MCF 10A (cell line): ENCODE measurements at regions of chr15 and their contacts with region 1.

Region 1: GRCh38 chr15:69394556-69395282 is 19.4 kb upstream of the KIF23 start:
- DNase-seq: peak; percentile 72
- H3K4me3 Mint-ChIP-seq: no peak overlapping the region
- H3K27ac Mint-ChIP-seq: no peak overlapping the region
- H3K4me1 Mint-ChIP-seq: peaks cover 27% of the 10 kb centered on the region
- H3K27me3 Mint-ChIP-seq: no peaks in the 10 kb centered on the region
- CTCF ChIP-seq: peak; percentile 95

Region 2: GRCh38 chr15:69058830-69059556 is 335.7 kb before region 1 on chr15:
- CTCF ChIA-PET with region 1: interaction called, 21 read pairs
- POLR2A ChIA-PET with region 1: interaction called, 3 read pairs
- intact Hi-C with region 1: loop called (anchors 1 kb)
- DNase-seq: peak; percentile 92
- H3K4me3 Mint-ChIP-seq: no peak overlapping the region
- H3K27ac Mint-ChIP-seq: no peak overlapping the region
- H3K4me1 Mint-ChIP-seq: no peaks in the 10 kb centered on the region
- H3K27me3 Mint-ChIP-seq: no peaks in the 10 kb centered on the region
- CTCF ChIP-seq: peak; percentile 89

Region 3: DNA sequence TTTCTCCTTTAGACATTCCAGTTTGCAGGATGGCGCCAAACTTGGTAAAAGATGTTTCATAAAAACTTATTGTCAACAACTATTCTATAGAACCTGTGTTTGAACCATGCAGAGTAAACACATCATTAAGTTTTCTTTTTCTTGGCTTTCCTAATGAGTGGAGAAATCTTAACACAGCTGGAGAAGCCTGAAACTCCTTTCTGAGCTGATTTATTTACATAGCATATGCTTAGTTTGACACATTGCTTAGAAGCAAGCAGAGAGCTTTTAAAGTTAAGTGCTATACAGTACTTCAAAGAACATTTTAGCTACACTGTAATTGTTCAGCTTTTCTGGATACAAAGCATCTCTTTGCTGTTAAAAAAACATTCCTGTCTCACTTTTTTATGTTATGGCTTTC is 157.0 kb before region 1 on chr15:
- CTCF ChIA-PET with region 1: interaction called, 10 read pairs
- POLR2A ChIA-PET with region 1: no interaction called
- intact Hi-C with region 1: no loop called
- DNase-seq: no peak
- H3K4me3 Mint-ChIP-seq: no peak overlapping the region
- H3K27ac Mint-ChIP-seq: no peak overlapping the region
- H3K4me1 Mint-ChIP-seq: peaks cover 12% of the 10 kb centered on the region
- H3K27me3 Mint-ChIP-seq: no peaks in the 10 kb centered on the region
- CTCF ChIP-seq: no peak

Region 4: GRCh38 chr15:69265347-69265955 is 129.3 kb before region 1 on chr15:
- CTCF ChIA-PET with region 1: interaction called, 9 read pairs
- POLR2A ChIA-PET with region 1: interaction called, 4 read pairs
- intact Hi-C with region 1: loop called (anchors 10 kb)
- DNase-seq: peak; percentile 63
- H3K4me3 Mint-ChIP-seq: no peak overlapping the region
- H3K27ac Mint-ChIP-seq: no peak overlapping the region
- H3K4me1 Mint-ChIP-seq: no peaks in the 10 kb centered on the region
- H3K27me3 Mint-ChIP-seq: no peaks in the 10 kb centered on the region
- CTCF ChIP-seq: peak; percentile 65

Region 5: DNA sequence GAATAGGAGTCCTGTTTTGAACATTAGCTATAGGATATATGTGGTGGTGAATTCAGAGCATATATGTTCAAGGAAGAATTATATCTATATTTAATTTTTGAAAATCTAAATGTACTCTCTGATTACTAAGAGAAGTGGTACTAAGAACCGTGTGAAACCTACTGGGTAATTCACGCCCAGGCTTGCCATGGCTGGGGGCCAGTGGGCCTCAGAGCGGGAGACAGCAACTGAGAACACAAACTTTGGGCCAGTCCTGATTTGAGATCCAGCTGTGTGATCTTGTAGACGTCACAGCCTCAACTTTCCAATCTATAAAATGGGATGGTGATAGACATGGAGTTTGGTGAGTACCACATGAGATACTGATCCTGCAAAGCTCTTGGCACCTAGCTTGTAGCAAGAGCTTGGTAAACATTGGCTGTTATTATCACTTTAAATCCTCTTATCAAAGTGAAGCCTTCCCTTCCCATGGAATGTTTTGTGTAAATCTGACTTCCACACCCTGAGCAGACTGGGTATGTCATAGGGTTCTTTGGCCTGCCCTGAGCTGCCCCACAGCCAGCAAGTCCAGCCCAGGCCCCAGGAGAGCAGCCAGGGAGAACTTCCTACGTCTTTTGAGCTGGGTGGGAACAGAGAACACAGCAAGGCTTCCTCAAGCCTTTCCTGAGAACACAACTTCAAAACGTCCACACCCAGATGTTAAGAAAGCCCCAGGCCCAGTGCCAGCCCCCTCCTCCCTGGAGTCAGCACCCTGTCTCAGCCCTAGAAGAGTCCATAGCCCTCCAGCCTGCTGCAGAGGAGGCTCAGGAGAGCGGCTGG is 104.2 kb before region 1 on chr15:
- CTCF ChIA-PET with region 1: interaction called, 10 read pairs
- POLR2A ChIA-PET with region 1: no interaction called
- intact Hi-C with region 1: no loop called
- DNase-seq: no peak
- H3K4me3 Mint-ChIP-seq: no peak overlapping the region
- H3K27ac Mint-ChIP-seq: no peak overlapping the region
- H3K4me1 Mint-ChIP-seq: no peaks in the 10 kb centered on the region
- H3K27me3 Mint-ChIP-seq: no peaks in the 10 kb centered on the region
- CTCF ChIP-seq: no peak

Region 6: GRCh38 chr15:69305204-69305931 is 89.4 kb before region 1 on chr15:
- CTCF ChIA-PET with region 1: interaction called, 5 read pairs
- POLR2A ChIA-PET with region 1: no interaction called
- intact Hi-C with region 1: loop called (anchors 2 kb)
- DNase-seq: peak; percentile 98
- H3K4me3 Mint-ChIP-seq: peak overlapping the region; percentile 35
- H3K27ac Mint-ChIP-seq: peak overlapping the region; percentile 96
- H3K4me1 Mint-ChIP-seq: peaks cover 46% of the 10 kb centered on the region
- H3K27me3 Mint-ChIP-seq: no peaks in the 10 kb centered on the region
- CTCF ChIP-seq: no peak

Region 7: GRCh38 chr15:69502470-69503045 is 107.8 kb after region 1 on chr15:
- CTCF ChIA-PET with region 1: no interaction called
- POLR2A ChIA-PET with region 1: no interaction called
- intact Hi-C with region 1: no loop called
- DNase-seq: no peak
- H3K4me3 Mint-ChIP-seq: no peak overlapping the region
- H3K27ac Mint-ChIP-seq: no peak overlapping the region
- H3K4me1 Mint-ChIP-seq: no peaks in the 10 kb centered on the region
- H3K27me3 Mint-ChIP-seq: no peaks in the 10 kb centered on the region
- CTCF ChIP-seq: no peak